ENCODE measurements at regions of chr15 and their contacts with region 1.

Region 1: DNA sequence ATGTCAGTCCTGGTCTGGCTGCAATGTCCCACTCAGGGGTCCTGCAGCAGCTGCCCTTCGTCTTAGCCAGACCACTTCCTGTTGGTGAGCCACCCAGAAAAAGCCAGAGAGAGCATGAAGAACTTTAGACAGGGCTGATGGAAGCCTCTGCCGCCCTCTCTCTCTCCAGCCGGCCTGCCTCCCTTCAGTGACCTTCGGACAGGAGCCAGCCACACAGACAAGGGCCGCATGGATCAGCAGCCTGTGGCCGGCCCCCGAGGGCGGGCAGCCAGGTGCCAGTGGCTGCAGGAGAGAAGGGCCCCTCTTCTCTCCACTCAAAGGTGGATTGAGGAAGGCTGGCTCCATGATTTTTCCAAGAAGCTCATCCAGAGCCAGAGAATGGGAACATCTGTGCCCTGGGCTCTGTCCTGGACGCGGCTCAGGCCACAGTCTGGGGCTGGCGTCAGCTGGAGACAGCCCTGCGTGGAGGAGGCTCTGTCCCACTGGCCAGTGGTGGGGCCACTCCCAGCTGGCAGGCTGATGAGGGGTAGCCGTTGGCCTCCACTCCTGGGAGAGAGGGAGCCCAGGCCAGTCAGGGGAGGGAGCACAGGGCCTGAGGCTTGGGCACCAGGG is 42.9 kb downstream of the ISG20 start:
- DNase-seq: peak in 9 of 10 donors; percentile 55 to 83 (median 65)
- H3K4me3 ChIP-seq: peak overlapping the region in 3 of 59 donors; percentile 4 to 38 (median 24)
- H3K27ac ChIP-seq: peak overlapping the region in 57 of 59 donors; percentile 21 to 91 (median 75)
- H3K27me3 ChIP-seq: no peaks in the 10 kb centered on the region
- CTCF ChIP-seq: peak in 2 of 56 donors; percentile 7 to 8

Region 2: DNA sequence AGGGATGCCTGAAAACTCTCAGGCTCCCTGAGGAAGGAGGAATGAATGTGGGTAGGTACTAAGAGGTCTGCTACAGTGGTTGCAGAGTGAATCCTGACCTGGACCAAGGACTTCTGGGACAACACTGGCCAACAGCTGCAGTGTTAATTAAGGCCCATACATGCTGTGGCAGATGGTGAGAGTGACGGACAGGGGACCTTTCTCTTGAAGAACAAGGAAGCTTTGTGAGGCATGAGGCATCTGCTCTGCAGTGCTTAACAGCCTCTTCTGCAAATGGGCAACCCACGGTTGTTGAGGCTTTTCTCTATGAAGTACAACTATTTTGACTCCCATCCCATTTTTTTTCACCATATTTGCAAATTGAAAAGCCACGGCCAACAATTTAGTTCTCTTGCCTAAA is 94.9 kb after region 1 on chr15:
- intact Hi-C with region 1: loop called in 1 of 2 experiments (anchors 10 kb)
- DNase-seq: peak in 6 of 10 donors; percentile 20 to 69 (median 55)
- H3K4me3 ChIP-seq: no peak overlapping the region
- H3K27ac ChIP-seq: peak overlapping the region in 2 of 59 donors; percentile 12 to 30
- H3K27me3 ChIP-seq: peaks cover 0 to 9% (median 0%) of the 10 kb centered on the region in 45 donors
- CTCF ChIP-seq: peak in 1 of 56 donors; percentile 15

Measured in dorsolateral prefrontal cortex (tissue), 120 donors.